ENCODE measurements at regions of chr1 and their contacts with region 1.

Region 1: DNA sequence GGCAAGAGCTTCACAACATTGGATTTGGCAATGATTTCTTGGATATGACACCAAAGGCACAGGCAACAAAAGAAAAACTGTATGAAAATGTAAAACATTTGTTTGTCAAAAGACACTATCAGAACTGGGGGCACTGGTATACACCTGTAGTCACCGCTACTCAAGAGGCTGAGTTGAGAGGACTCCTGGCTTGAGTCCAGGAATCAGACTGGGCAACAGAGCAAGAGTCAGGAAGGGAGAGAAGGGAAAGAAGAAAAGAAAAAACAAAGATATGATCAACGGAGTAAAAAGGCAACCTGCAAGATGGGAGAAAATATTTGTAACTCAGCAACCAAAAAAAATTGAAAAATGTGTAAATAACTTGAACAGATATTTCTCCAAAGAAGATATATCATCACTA is 6.0 kb upstream of the TUT4 start:
- DNase-seq: no peak
- ATAC-seq: no peak
- H3K4me3 ChIP-seq: no peak overlapping the region
- H3K27ac ChIP-seq: no peak overlapping the region
- H3K4me1 ChIP-seq: peaks cover 2% of the 10 kb centered on the region; the same call in 1 of the 2 replicates
- H3K27me3 ChIP-seq: no peaks in the 10 kb centered on the region
- CTCF ChIP-seq: no peak
- POLR2A ChIP-seq: no peak
- RAD21 ChIP-seq: no peak

Region 2: DNA sequence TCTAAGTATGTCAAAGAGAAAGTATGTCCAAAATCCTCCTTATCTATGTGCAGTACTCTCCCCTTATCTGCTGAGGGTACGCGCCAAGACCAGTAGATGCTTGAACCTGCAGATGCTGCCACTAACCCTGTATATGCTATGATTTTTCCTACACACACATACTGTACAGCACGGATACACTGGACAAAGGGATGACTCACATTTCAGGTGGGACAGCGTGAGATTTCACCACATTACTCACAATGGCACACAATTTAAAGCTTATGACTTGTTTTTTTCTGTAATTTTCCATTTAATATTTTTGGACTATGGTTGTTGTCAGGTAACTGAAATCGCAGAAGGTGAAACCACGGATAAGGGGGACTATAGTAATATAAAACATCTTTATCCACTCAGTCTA is 158.8 kb before region 1 on chr1:
- CTCF ChIA-PET with region 1: no interaction called
- POLR2A ChIA-PET with region 1: no interaction called
- dilution Hi-C with region 1: no loop called
- in situ Hi-C with region 1: no loop called
- intact Hi-C with region 1: no loop called
- DNase-seq: no peak
- ATAC-seq: no peak
- H3K4me3 ChIP-seq: no peak overlapping the region
- H3K27ac ChIP-seq: no peak overlapping the region
- H3K4me1 ChIP-seq: no peaks in the 10 kb centered on the region
- H3K27me3 ChIP-seq: no peaks in the 10 kb centered on the region
- CTCF ChIP-seq: no peak
- POLR2A ChIP-seq: no peak
- RAD21 ChIP-seq: no peak

Region 3: DNA sequence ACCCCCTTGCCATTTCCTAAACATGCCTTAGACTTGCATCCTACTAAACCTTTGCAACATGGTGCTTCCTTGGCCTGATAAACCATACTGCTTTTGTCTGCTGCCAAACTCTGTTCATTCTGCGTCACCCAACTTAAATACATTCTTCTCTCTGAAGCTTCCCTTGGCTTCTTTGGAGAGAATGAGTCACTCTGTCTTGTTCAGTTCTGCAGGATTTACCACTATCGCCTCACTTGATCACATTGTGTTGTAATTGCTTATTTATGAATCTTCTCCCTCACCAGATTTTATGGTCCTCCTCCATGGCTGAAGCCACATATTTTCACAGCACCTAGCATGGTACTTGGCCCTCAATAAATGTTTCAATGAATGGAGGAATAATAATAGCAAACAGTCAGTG is 15.7 kb after region 1 on chr1:
- CTCF ChIA-PET with region 1: no interaction called
- POLR2A ChIA-PET with region 1: interaction called, 12 read pairs
- dilution Hi-C with region 1: no loop called
- in situ Hi-C with region 1: no loop called
- intact Hi-C with region 1: no loop called
- DNase-seq: peak; percentile 98
- ATAC-seq: peak; percentile 96
- H3K4me3 ChIP-seq: no peak overlapping the region
- H3K27ac ChIP-seq: peak overlapping the region; percentile 28; the same call in 1 of the 2 replicates
- H3K4me1 ChIP-seq: peaks cover 8% of the 10 kb centered on the region
- H3K27me3 ChIP-seq: 0 out of 2 replicates have a peak, but pooled peaks cover 2% of the 10 kb centered on the region
- CTCF ChIP-seq: no peak
- POLR2A ChIP-seq: no peak
- RAD21 ChIP-seq: no peak